SK-N-SH (cell line): ENCODE measurements at regions of chr12 and their contacts with region 1.

Region 1: GRCh38 chr12:110888256-110888991 is 32.0 kb downstream of the MYL2 start:
- DNase-seq: no peak
- H3K4me3 ChIP-seq: peak overlapping the region in 1 of 2 experiments; percentile 60; a peak in 1 of 4 replicates
- H3K27ac ChIP-seq: no peak overlapping the region
- H3K4me1 ChIP-seq: no peaks in the 10 kb centered on the region; a peak in 1 of 4 replicates
- H3K27me3 ChIP-seq: no peaks in the 10 kb centered on the region
- CTCF ChIP-seq: no peak
- EP300 ChIP-seq: no peak
- RAD21 ChIP-seq: no peak

Region 2: DNA sequence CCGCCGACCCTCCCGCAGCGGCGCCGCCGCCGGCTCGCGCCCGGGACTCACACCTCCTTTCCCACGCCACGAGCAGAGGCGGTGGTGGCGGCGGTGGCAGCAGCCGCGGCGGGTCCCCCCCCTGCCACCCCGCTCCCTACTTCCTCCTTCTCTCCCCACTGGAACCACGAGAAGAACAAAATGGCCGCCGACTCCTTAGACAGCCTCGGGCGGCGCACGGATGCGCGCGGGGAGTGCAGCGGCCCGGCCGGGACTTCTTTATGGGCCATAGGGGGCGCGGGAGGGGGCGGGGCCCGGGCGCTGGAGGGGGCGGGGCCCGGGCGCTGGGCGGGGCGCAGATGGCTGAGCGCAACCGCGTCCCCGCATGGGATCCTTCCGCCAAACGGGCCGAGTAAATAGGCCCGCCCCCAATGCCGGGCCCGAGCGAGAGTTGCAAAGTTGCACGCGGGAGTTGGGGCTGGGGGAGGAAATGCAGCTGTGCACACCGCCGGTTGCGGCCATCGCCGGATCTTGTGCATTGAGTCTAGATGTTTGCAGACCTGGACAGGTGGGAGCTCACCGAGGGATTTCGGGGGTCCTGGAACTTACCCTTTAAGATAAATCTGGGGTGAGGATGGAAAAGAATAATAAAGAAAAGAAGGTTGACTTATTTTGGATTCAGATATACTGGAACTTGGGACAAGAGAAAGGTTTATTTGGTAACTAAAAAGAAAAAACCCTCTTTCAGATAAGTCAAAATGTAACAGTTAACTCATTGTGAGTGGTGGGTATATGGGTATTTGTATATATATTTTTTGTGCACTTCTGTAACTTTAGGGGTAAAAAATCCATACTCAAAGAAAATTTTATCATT is 145.5 kb before region 1 on chr12 and contains the start of gene PPP1CC:
- CTCF ChIA-PET with region 1: interaction called, 15 read pairs
- POLR2A ChIA-PET with region 1: no interaction called
- DNase-seq: peak; percentile 98
- H3K4me3 ChIP-seq: peak within 1 kb of the TSS; percentile 71 to 79
- H3K27ac ChIP-seq: peak within 1 kb of the TSS; percentile 75 to 85
- H3K4me1 ChIP-seq: peaks cover 21 to 29% of the 10 kb centered on the region in 2 experiments
- H3K27me3 ChIP-seq: no peaks in the 10 kb centered on the region
- CTCF ChIP-seq: no peak
- EP300 ChIP-seq: no peak; a peak in 1 of 4 replicates
- RAD21 ChIP-seq: no peak
- polyA plus RNA-seq, gene PPP1CC: 62.0 and 74.3 TPM in 2 replicates

Region 3: DNA sequence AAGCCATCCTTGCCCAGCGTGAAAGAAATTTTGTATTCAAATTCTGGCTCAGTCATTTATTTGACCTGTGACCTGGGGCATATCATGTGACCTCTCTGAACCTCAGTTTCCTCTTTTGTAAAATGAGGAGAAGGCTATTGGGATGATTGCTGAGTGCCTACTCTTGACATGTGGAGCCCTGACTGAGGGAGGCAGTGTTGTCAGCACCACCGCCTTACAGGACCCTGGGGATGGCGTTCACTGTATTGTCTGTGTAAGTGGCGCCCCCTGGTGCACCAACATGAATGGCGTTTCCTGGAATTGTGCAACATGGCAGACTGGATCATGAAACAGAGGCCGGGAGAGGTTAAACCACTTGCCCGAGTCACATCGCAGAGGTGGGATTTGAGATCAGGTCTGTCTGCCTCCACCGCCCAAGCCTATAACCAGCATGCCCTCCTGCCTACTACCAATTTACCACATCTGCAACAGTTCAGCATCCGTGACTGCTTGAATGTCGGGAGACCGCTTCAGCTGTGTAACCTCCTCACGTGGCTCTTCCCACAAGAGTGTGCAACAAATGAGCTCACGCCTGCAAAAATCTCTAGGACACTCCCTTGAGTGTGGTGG is 61.7 kb before region 1 on chr12:
- CTCF ChIA-PET with region 1: interaction called, 29 read pairs
- POLR2A ChIA-PET with region 1: no interaction called
- DNase-seq: peak; percentile 82
- H3K4me3 ChIP-seq: no peak overlapping the region; a peak in 1 of 4 replicates
- H3K27ac ChIP-seq: no peak overlapping the region
- H3K4me1 ChIP-seq: no peaks in the 10 kb centered on the region; a peak in 1 of 4 replicates
- H3K27me3 ChIP-seq: no peaks in the 10 kb centered on the region
- CTCF ChIP-seq: peak; percentile 86
- EP300 ChIP-seq: no peak
- RAD21 ChIP-seq: peak; percentile 95

Region 4: DNA sequence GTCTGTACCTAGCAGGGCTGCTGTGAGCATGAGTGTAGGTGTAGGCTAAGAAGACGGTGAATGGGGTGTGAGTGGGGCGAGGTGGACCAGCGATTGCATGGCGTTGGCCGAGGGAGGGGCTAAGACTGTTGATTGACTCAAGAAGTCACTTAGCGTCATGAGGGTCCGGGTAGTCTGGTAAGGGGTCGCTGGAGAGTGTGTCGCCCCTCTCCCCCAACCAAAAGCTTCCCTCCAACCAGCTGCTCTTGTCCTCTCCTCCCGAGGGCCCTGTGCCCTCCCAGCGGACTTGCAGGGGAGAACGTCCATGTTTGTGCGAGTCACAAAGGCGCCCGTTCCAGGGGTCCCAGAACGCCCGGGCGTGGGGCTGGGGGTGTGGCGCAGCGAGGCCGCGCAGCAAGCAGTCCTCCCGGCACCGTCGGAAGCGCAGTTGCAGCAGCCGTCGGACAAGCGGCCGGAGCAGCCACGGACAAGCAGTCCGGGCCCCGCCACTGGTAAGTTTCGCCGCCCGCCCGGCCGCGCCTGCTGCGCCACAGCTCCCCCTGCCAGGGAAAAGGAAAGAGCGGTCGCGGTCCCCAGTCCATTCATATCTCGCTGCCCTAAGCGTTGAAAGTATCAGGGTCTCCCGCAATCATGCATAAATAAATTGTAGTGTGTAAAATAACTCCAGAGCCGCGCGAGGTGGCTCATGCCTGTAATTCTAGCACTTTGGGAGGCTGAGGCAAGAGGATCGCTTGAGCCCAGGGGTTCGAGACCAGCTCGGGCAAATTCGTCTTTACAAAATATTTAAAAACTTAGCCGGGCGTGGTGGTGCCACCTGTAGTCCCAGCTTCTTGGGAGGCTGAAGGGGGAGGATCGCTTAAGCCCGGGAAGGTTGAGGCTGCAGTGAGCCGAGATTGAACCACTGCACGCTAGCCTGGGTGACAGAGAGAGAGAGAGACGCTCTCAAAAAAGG is 41.5 kb before region 1 on chr12 and contains the start of gene CCDC63:
- CTCF ChIA-PET with region 1: interaction called, 35 read pairs
- POLR2A ChIA-PET with region 1: no interaction called
- DNase-seq: peak; percentile 86
- H3K4me3 ChIP-seq: peak within 1 kb of the TSS in 1 of 2 experiments; percentile 24; a peak in 1 of 4 replicates
- H3K27ac ChIP-seq: no peak within 1 kb of the TSS
- H3K4me1 ChIP-seq: peaks cover 3 to 7% of the 10 kb centered on the region in 2 experiments; a peak in 1 of 4 replicates
- H3K27me3 ChIP-seq: no peaks in the 10 kb centered on the region
- CTCF ChIP-seq: peak; percentile 45
- EP300 ChIP-seq: no peak
- RAD21 ChIP-seq: peak; percentile 48
- polyA plus RNA-seq, gene CCDC63: not detected in 2 replicates

Region 5: DNA sequence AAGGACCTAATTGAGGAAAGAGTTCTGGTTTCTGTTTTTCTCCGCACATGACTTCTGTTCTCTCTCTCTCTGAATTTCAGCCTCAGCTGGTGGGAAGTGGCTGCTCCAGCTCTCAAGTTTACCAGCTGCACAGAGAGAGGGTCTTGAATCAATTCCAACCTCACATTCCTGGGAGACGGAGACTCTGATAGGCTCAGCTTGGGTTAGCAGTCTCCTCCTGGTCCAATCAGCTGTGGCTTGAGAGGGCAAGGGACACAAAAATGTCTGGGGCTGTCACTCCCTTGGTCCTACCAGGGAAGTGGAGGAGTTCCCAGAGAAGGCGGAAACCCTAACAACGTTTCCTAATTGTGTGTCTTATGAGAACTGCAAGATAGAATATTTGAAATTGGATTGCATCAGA is 34.6 kb before region 1 on chr12:
- CTCF ChIA-PET with region 1: interaction called, 35 read pairs
- POLR2A ChIA-PET with region 1: no interaction called
- DNase-seq: no peak
- H3K4me3 ChIP-seq: no peak overlapping the region
- H3K27ac ChIP-seq: no peak overlapping the region
- H3K4me1 ChIP-seq: no peaks in the 10 kb centered on the region
- H3K27me3 ChIP-seq: no peaks in the 10 kb centered on the region
- CTCF ChIP-seq: no peak
- EP300 ChIP-seq: no peak
- RAD21 ChIP-seq: no peak

Region 6: GRCh38 chr12:110874781-110875180 is 13.6 kb before region 1 on chr12:
- CTCF ChIA-PET with region 1: interaction called, 14 read pairs
- POLR2A ChIA-PET with region 1: no interaction called
- DNase-seq: no peak
- H3K4me3 ChIP-seq: no peak overlapping the region
- H3K27ac ChIP-seq: no peak overlapping the region
- H3K4me1 ChIP-seq: 0 out of 4 replicates have a peak, but pooled peaks cover 0 to 4% of the 10 kb centered on the region in 2 experiments
- H3K27me3 ChIP-seq: no peaks in the 10 kb centered on the region
- CTCF ChIP-seq: no peak
- EP300 ChIP-seq: no peak
- RAD21 ChIP-seq: no peak

Region 7: DNA sequence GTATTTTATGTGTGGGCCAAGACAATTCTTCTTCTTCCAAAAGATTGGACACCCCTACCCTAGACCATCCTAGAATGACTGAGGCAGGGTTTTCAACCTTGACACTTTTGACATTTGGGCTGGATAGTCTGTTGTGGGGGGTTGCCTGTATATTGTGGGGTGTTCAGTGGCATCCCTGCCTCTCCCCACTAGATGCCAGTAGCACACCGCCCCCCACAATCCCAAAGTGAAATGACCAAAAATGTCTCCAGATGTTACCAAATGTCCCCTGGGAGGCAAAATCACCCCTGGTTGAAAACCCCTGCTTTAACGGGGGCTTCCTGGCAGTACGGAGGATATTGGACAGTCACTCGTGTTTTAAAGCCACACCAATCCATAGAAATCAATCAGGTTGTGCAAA is 260.9 kb after region 1 on chr12:
- CTCF ChIA-PET with region 1: no interaction called
- POLR2A ChIA-PET with region 1: no interaction called
- DNase-seq: no peak
- H3K4me3 ChIP-seq: no peak overlapping the region
- H3K27ac ChIP-seq: no peak overlapping the region
- H3K4me1 ChIP-seq: peaks cover 0 to 12% of the 10 kb centered on the region in 2 experiments; a peak in 2 of 4 replicates
- H3K27me3 ChIP-seq: no peaks in the 10 kb centered on the region
- CTCF ChIP-seq: no peak
- EP300 ChIP-seq: no peak
- RAD21 ChIP-seq: peak; percentile 75